ENCODE measurements at regions of chr9 and their contacts with region 1.

Region 1: DNA sequence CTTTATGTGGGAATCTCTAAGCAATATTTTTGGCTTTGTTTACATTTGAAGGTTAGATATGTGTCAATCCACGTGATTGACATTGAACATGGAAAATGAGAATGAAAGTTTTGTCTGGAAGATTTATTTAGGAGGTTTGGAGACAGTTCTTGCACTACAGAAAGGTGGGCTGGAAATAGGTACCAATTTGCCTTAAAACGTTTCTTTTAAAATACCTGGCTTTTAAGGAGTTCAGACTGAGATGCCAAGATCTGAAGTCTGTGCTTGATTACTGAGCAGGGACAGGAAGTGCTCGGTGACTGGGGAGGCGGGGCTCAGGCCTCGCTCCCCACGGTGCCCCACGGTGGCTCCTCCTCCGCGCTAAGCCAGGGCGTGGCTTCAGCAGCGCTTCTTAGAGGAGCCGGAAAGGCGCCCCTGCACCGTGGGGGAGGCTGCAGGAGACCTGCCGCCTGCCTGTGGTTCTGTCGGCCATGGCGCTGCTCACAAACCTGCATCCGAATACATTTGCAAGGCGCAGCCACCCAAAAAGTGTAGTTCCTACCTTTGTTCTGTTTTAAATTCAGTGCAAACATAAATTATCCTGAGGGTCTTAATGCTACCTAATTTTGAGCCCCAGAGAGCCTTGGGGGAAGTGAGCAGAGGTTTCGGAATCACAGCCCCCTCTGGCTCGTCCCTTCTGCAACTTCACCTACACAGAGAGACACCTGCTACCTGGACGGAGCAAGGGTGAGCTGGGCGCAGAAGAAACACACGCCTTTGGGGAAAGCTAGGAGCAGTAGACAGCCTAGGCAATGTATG is 49.2 kb downstream of the USP20 start:
- DNase-seq: peak; percentile 98
- ATAC-seq: peak; percentile 55
- H3K4me3 Mint-ChIP-seq: peak overlapping the region; percentile 97
- H3K27ac Mint-ChIP-seq: peak overlapping the region; percentile 99
- H3K4me1 Mint-ChIP-seq: peaks cover 41% of the 10 kb centered on the region
- H3K27me3 Mint-ChIP-seq: no peaks in the 10 kb centered on the region

Region 2: DNA sequence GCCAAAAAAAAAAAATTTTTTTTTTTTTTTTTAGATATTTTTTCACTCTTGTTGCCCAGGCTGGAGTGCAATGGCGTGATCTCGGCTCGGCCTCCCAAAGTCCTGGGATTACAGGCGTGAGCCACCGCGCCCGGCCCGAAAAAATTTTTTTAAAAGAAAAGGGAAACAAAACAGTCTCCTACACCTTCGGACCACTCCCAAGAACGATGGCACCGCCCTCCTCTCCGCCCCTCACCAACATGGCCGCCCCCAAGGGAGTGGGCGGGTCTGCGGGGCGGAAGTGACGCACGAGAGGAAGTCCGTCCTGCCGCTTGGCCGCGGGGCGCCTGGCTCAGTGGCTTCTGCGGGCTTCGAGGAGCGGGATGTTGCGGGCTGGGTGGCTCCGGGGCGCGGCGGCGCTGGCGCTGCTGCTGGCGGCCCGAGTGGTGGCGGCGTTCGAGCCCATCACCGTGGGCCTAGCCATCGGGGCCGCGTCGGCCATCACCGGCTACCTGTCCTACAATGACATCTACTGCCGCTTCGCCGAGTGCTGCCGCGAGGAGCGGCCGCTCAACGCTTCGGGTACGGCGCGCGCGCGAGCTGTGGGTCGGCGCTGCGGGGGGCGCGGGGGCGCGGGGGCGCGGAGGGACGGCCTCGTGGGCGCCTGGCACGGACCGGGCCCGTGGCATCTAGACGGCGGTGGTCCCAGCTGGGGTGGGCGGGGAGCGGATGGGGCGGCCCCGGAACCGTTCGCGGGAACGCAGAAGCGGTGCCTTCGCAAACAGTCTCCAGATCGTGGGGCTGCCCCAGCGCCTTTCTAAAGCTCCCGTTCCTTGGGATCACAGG is 81.4 kb before region 1 on chr9 and contains the start of gene TOR1B:
- CTCF ChIA-PET with region 1: no interaction called
- POLR2A ChIA-PET with region 1: no interaction called
- intact Hi-C with region 1: loop called in 1 of 2 experiments (anchors 1 kb)
- DNase-seq: peak; percentile 95
- ATAC-seq: peak; percentile 92
- H3K4me3 Mint-ChIP-seq: peak within 1 kb of the TSS; percentile 81
- H3K27ac Mint-ChIP-seq: peak within 1 kb of the TSS; percentile 90
- H3K4me1 Mint-ChIP-seq: peaks cover 25% of the 10 kb centered on the region
- H3K27me3 Mint-ChIP-seq: no peaks in the 10 kb centered on the region
- total RNA-seq, gene TOR1B: 18.0 to 22.1 TPM

Region 3: GRCh38 chr9:129852534-129852933 is 31.9 kb before region 1 on chr9:
- CTCF ChIA-PET with region 1: no interaction called
- POLR2A ChIA-PET with region 1: no interaction called
- intact Hi-C with region 1: no loop called
- DNase-seq: no peak
- ATAC-seq: no peak
- H3K4me3 Mint-ChIP-seq: no peak overlapping the region
- H3K27ac Mint-ChIP-seq: no peak overlapping the region
- H3K4me1 Mint-ChIP-seq: peaks cover 47% of the 10 kb centered on the region
- H3K27me3 Mint-ChIP-seq: no peaks in the 10 kb centered on the region

Region 4: DNA sequence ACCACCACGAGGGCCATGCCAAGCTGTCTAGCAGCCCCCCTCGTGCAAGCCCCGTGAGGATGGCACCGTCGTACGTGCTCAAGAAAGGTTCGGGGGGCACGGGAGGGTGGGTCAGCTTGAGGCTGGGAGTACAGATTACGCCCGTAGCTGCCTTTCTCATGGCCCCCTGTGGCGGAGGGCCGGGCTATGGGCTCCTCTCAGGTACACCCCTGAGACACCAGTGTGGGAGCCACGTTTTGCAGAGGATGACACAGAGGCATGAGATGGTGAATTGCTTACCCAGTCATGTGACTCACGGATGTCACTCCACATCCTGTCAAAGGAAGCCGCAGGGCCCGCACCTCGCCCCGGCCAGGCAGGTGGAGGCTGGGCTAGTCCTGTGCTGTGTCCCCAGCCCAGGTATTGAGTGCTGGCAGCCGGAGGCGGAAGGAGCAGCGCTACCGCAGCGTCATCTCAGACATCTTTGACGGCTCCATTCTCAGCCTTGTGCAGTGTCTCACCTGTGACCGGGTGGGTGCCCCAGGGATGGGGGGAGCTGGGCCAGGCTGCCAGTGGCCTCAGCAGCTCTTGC is 15.4 kb before region 1 on chr9:
- CTCF ChIA-PET with region 1: interaction called, 5 read pairs
- POLR2A ChIA-PET with region 1: interaction called, 5 read pairs
- intact Hi-C with region 1: loop called (anchors 1 to 2 kb)
- DNase-seq: peak; percentile 92
- ATAC-seq: peak; percentile 87
- H3K4me3 Mint-ChIP-seq: peak overlapping the region; percentile 59
- H3K27ac Mint-ChIP-seq: peak overlapping the region; percentile 90
- H3K4me1 Mint-ChIP-seq: peaks cover 69% of the 10 kb centered on the region
- H3K27me3 Mint-ChIP-seq: no peaks in the 10 kb centered on the region

Region 5: DNA sequence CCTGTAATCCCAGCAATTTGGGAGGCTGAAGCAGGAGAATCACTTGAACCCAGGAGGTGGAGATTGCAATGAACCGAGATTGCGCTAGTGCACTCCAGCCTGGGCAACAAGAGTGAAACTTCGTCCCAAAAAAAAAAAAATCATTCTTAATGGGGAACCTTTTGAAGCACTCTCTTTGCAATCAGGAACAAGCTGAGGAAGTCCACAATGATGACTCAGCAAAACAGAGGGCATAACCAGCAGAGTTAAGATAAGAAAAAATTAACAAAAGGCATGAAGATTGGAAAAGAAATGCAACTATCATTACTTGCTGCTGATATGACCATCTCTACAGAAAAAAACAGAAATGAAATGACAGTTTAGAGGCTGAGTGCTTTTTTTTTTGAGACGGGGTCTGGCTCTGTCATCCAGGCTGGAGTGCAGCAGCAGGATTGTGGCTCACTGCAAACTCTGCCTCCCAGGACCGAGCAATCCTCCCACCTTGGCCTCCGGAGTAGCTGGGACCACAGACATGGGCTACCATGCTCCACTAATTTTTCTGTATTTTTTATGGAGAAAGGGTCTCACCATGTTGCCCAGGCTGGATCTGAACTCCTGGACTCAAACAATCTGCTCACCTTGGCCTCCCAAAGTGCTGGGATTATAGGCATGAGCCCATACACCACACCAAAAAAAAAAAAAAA is 70.6 kb after region 1 on chr9:
- CTCF ChIA-PET with region 1: interaction called, 18 read pairs
- POLR2A ChIA-PET with region 1: interaction called, 5 read pairs
- intact Hi-C with region 1: loop called (anchors 1 kb)
- DNase-seq: no peak
- ATAC-seq: no peak
- H3K4me3 Mint-ChIP-seq: no peak overlapping the region
- H3K27ac Mint-ChIP-seq: peak overlapping the region; percentile 66
- H3K4me1 Mint-ChIP-seq: peaks cover 61% of the 10 kb centered on the region
- H3K27me3 Mint-ChIP-seq: no peaks in the 10 kb centered on the region

Region 6: DNA sequence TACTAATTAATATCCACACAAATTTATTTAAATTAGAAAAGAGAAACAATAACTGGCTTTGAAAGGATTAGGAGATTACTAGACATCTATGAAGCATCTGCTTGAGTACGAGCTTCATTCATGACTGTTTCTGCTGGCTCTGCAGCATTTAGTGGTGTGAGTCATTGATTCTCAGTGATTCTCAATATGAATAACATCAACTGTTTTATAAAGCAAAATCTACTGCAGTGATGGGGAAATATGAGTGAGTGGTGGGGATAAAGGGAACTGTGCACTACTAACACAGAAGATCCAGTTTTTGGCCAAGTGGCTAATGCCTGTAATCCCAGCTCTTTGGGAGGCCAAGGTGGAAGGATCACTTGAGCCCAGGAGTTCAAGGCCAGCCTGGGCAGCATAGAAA is 150.2 kb after region 1 on chr9:
- CTCF ChIA-PET with region 1: interaction called, 11 read pairs
- POLR2A ChIA-PET with region 1: interaction called, 21 read pairs
- intact Hi-C with region 1: loop called (anchors 1 to 2 kb)
- DNase-seq: peak; percentile 62
- ATAC-seq: peak; percentile 54
- H3K4me3 Mint-ChIP-seq: peak overlapping the region; percentile 61
- H3K27ac Mint-ChIP-seq: peak overlapping the region; percentile 100
- H3K4me1 Mint-ChIP-seq: peaks cover 88% of the 10 kb centered on the region
- H3K27me3 Mint-ChIP-seq: no peaks in the 10 kb centered on the region

Region 7: DNA sequence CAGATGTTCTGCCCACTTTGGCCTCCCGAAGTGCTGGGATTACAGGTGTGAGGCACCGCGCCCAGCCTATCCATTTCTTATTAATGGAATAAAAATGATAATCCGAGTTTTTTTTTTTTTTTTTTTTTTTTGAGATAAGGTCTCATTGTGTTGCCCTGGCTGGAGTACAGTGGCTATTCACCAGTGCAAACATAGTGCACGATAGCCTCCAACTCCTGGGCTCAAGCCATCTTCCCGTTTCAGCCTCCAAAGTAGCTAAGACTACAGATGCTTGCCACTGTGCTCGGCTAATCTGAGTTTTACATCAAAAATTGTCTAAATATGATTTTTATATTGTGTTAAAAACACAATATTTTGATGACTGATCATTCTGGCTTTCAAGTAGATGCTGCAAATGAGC is 175.9 kb after region 1 on chr9:
- CTCF ChIA-PET with region 1: no interaction called
- POLR2A ChIA-PET with region 1: no interaction called
- intact Hi-C with region 1: no loop called
- DNase-seq: no peak
- ATAC-seq: no peak
- H3K4me3 Mint-ChIP-seq: no peak overlapping the region
- H3K27ac Mint-ChIP-seq: no peak overlapping the region
- H3K4me1 Mint-ChIP-seq: peaks cover 21% of the 10 kb centered on the region
- H3K27me3 Mint-ChIP-seq: no peaks in the 10 kb centered on the region

Region 8: DNA sequence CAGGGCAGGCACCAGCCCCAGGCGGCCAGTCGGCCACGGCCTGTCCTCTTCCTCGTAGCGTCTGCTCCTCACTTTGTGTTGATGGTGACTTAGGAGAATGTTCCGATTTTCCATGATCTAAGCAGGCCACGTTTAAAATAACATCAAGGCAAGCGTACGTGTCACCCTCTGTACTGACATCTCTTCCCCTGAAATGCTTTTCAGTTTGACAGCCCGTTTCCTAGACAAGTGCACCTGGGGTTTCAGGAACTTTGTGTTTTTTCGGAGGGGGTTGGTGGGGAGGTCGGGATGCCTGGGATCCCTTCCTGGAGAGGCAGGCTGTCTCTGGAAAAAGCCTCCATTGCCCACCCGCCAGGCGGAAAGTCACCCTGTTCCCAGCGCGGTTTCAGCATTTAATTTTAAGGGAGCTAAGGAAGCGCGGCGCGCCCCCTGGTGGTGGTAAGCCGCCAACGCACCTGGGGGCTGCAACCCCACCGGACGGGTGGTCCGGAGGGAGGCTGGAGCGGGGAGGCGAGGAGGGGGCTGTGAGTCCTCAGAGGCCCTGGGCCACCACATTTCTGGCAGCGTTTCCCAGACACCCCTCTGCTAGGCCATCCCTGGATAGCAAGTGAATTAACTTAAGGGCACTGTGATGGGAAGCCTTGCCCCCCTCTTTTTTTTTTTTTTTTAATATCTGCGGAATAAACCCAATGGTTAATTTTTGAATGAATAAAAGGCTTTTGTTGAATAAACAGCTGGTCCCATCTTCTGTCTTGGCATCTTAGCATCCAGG is 351.7 kb after region 1 on chr9:
- CTCF ChIA-PET with region 1: no interaction called
- POLR2A ChIA-PET with region 1: no interaction called
- intact Hi-C with region 1: loop called (anchors 2 to 10 kb)
- DNase-seq: peak; percentile 79
- ATAC-seq: no peak
- H3K4me3 Mint-ChIP-seq: no peak overlapping the region
- H3K27ac Mint-ChIP-seq: peak overlapping the region; percentile 47
- H3K4me1 Mint-ChIP-seq: peaks cover 30% of the 10 kb centered on the region
- H3K27me3 Mint-ChIP-seq: no peaks in the 10 kb centered on the region

Region 9: GRCh38 chr9:131668439-131669268 is 1784.2 kb after region 1 on chr9:
- CTCF ChIA-PET with region 1: no interaction called
- POLR2A ChIA-PET with region 1: no interaction called
- intact Hi-C with region 1: loop called in 1 of 2 experiments (anchors 10 kb)
- DNase-seq: peak; percentile 83
- ATAC-seq: peak; percentile 68
- H3K4me3 Mint-ChIP-seq: peak overlapping the region; percentile 54
- H3K27ac Mint-ChIP-seq: peak overlapping the region; percentile 96
- H3K4me1 Mint-ChIP-seq: peaks cover 93% of the 10 kb centered on the region
- H3K27me3 Mint-ChIP-seq: no peaks in the 10 kb centered on the region